ENCODE measurements at regions of chr3 and their contacts with region 1.

Region 1: DNA sequence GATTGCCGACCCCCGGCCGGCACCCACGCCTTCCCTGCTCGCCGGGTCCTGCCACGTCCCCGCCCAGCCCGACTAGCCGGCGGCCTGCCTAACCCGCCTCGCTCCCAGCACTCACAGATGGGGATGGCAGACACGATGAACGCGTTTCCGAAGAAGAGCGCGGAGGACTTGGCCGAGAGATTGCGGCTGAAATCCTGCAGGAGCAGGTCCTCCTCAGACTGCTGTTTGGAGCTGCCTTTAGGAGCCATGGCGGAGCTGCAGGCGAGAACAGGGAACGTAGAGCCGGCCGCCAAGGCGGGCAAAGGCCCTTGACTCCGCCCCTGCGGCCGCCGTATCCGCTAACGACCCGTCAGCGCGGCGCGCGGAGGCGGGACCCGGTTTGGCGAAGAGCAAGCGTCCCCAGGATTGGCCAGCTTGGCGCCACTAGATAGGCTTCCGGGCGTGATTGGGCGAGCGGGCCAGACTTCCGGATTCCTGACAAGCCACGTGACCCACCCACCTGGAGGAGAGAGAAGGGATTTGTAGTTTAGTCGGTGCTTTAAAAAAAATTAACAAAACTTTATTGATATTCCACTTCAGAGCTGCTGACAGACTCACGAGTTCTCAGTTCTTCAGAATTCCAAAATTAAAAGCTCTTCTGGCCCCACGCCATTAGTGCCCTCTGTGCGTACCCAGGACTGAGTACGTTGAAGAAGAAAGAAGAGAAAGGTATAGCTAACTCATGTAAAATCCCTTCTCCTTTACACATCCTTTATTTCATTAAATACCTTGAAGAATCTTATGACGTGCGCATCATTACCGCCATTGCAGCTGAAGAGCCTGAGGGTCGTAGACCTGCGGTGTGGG is at the start of gene SSR3:
- DNase-seq: peak; percentile 99
- H3K4me3 ChIP-seq: peak within 1 kb of the TSS; percentile 97 to 99 (median 97)
- H3K27ac ChIP-seq: peak within 1 kb of the TSS; percentile 87
- H3K4me1 ChIP-seq: peaks cover 34% of the 10 kb centered on the region
- H3K27me3 ChIP-seq: no peaks in the 10 kb centered on the region
- CTCF ChIP-seq: peak in 1 of 2 donors; percentile 8
- total RNA-seq, gene SSR3: 375 to 388 TPM

Region 2: DNA sequence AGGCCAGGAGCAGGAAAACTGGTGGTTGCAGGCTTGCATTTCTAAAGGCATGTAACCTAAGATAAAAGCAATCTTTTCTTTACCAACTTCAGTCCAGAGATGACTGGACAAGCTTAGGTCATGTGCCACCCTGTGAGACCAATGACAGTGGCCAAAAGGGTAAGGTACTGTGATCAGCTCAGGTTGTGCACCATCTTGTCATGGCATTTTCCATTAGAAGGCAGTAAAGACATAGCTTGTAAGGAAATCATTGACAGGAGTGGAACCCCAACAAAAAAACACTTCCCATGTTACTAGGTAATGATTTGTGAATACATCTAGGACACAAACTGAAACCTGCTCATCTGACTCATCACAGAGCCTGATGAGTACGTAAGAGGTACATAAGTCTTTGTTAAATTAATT is 35.3 kb before region 1 on chr3:
- CTCF ChIA-PET with region 1: no interaction called
- dilution Hi-C with region 1: no loop called
- in situ Hi-C with region 1: no loop called
- intact Hi-C with region 1: no loop called
- DNase-seq: peak; percentile 16
- H3K4me3 ChIP-seq: no peak overlapping the region
- H3K27ac ChIP-seq: no peak overlapping the region
- H3K4me1 ChIP-seq: peaks cover 15% of the 10 kb centered on the region
- H3K27me3 ChIP-seq: no peaks in the 10 kb centered on the region
- CTCF ChIP-seq: no peak

Region 3: DNA sequence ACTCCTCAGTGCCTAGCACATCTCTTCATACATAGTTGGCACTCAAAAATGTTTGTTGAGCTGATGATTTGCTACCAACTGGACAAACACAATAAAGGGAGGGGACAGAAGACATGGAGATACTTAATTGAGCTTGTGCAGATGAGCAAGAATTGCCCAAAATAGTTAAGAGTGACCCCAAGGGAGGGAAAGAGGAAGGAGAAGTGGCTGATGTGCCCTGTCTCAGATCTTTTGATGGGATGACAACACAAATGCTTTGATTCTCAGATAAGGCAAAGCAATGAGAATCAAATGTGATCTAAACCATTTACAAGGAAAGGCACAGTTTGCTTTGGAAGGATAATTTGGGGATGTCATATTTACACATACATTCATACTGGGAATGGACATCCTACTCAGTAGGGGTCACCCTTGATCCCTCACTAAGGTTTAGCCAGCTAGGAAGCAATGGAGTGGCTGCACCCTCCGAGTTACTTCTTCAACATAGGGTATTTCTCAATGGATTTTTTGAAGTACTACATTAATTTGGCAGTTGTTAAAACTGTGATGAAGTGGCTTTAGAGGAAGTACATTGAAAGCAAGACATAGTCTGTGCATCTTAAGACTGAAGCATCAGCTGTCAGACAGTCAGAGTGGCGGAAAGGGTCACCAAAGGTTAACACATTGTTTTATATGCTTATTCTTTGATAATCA is 21.7 kb after region 1 on chr3:
- CTCF ChIA-PET with region 1: no interaction called
- dilution Hi-C with region 1: no loop called
- in situ Hi-C with region 1: no loop called
- intact Hi-C with region 1: loop called (anchors 2 kb)
- DNase-seq: no peak
- H3K4me3 ChIP-seq: no peak overlapping the region
- H3K27ac ChIP-seq: no peak overlapping the region
- H3K4me1 ChIP-seq: peaks cover 8% of the 10 kb centered on the region
- H3K27me3 ChIP-seq: no peaks in the 10 kb centered on the region
- CTCF ChIP-seq: peak in 1 of 2 donors; percentile 13

Region 4: GRCh38 chr3:156586905-156587759 is 32.1 kb after region 1 on chr3:
- CTCF ChIA-PET with region 1: no interaction called
- dilution Hi-C with region 1: no loop called
- in situ Hi-C with region 1: no loop called
- intact Hi-C with region 1: no loop called
- DNase-seq: no peak
- H3K4me3 ChIP-seq: no peak overlapping the region
- H3K27ac ChIP-seq: no peak overlapping the region
- H3K4me1 ChIP-seq: no peaks in the 10 kb centered on the region
- H3K27me3 ChIP-seq: no peaks in the 10 kb centered on the region
- CTCF ChIP-seq: no peak

Region 5: GRCh38 chr3:156620260-156620659 is 65.2 kb after region 1 on chr3:
- CTCF ChIA-PET with region 1: no interaction called
- dilution Hi-C with region 1: no loop called
- in situ Hi-C with region 1: no loop called
- intact Hi-C with region 1: loop called (anchors 2 kb)
- DNase-seq: peak; percentile 82
- H3K4me3 ChIP-seq: no peak overlapping the region
- H3K27ac ChIP-seq: no peak overlapping the region
- H3K4me1 ChIP-seq: peaks cover 43% of the 10 kb centered on the region
- H3K27me3 ChIP-seq: no peaks in the 10 kb centered on the region
- CTCF ChIP-seq: no peak

Region 6: GRCh38 chr3:156626104-156626503 is 71.0 kb after region 1 on chr3:
- CTCF ChIA-PET with region 1: no interaction called
- dilution Hi-C with region 1: no loop called
- in situ Hi-C with region 1: no loop called
- intact Hi-C with region 1: loop called (anchors 1 kb)
- DNase-seq: peak; percentile 92
- H3K4me3 ChIP-seq: no peak overlapping the region
- H3K27ac ChIP-seq: no peak overlapping the region
- H3K4me1 ChIP-seq: peaks cover 44% of the 10 kb centered on the region
- H3K27me3 ChIP-seq: no peaks in the 10 kb centered on the region
- CTCF ChIP-seq: no peak

Region 7: GRCh38 chr3:156957715-156958114 is 402.6 kb after region 1 on chr3:
- CTCF ChIA-PET with region 1: no interaction called
- dilution Hi-C with region 1: no loop called
- in situ Hi-C with region 1: no loop called
- intact Hi-C with region 1: no loop called
- DNase-seq: no peak
- H3K4me3 ChIP-seq: no peak overlapping the region
- H3K27ac ChIP-seq: no peak overlapping the region
- H3K4me1 ChIP-seq: no peaks in the 10 kb centered on the region
- H3K27me3 ChIP-seq: no peaks in the 10 kb centered on the region
- CTCF ChIP-seq: no peak